Activated CD4-positive, alpha-beta T cell treated with anti-CD3 and anti-CD28 coated beads for 36 hours (primary cell): ENCODE measurements at regions of chr6 and their contacts with region 1.

Region 1: GRCh38 chr6:38997128-38997761 is 51.3 kb upstream of the GLP1R start:
- DNase-seq: peak; percentile 68
- ATAC-seq: peak; percentile 55
- H3K4me3 Mint-ChIP-seq: no peak overlapping the region
- H3K27ac Mint-ChIP-seq: no peak overlapping the region
- H3K4me1 Mint-ChIP-seq: no peaks in the 10 kb centered on the region
- H3K27me3 Mint-ChIP-seq: peaks cover 29% of the 10 kb centered on the region

Region 2: GRCh38 chr6:38933432-38933831 is 63.8 kb before region 1 on chr6:
- CTCF ChIA-PET with region 1: no interaction called
- POLR2A ChIA-PET with region 1: no interaction called
- intact Hi-C with region 1: no loop called
- DNase-seq: no peak
- ATAC-seq: peak; percentile 44
- H3K4me3 Mint-ChIP-seq: no peak overlapping the region
- H3K27ac Mint-ChIP-seq: no peak overlapping the region
- H3K4me1 Mint-ChIP-seq: no peaks in the 10 kb centered on the region
- H3K27me3 Mint-ChIP-seq: peaks cover 2% of the 10 kb centered on the region

Region 3: GRCh38 chr6:38955861-38956260 is 41.4 kb before region 1 on chr6:
- CTCF ChIA-PET with region 1: no interaction called
- POLR2A ChIA-PET with region 1: interaction called, 10 read pairs
- intact Hi-C with region 1: no loop called
- DNase-seq: no peak
- ATAC-seq: no peak
- H3K4me3 Mint-ChIP-seq: no peak overlapping the region
- H3K27ac Mint-ChIP-seq: no peak overlapping the region
- H3K4me1 Mint-ChIP-seq: no peaks in the 10 kb centered on the region
- H3K27me3 Mint-ChIP-seq: peaks cover 8% of the 10 kb centered on the region

Region 4: GRCh38 chr6:39029156-39030011 is 32.1 kb after region 1 on chr6:
- CTCF ChIA-PET with region 1: interaction called, 10 read pairs
- POLR2A ChIA-PET with region 1: no interaction called
- intact Hi-C with region 1: no loop called
- DNase-seq: peak; percentile 80
- ATAC-seq: peak; percentile 92
- H3K4me3 Mint-ChIP-seq: no peak overlapping the region
- H3K27ac Mint-ChIP-seq: no peak overlapping the region
- H3K4me1 Mint-ChIP-seq: no peaks in the 10 kb centered on the region
- H3K27me3 Mint-ChIP-seq: peaks cover 32% of the 10 kb centered on the region

Region 5: GRCh38 chr6:39309942-39310531 is 312.8 kb after region 1 on chr6:
- CTCF ChIA-PET with region 1: interaction called, 27 read pairs
- POLR2A ChIA-PET with region 1: no interaction called
- intact Hi-C with region 1: loop called in 1 of 2 experiments (anchors 1 kb)
- DNase-seq: peak; percentile 81
- ATAC-seq: peak; percentile 79
- H3K4me3 Mint-ChIP-seq: no peak overlapping the region
- H3K27ac Mint-ChIP-seq: no peak overlapping the region
- H3K4me1 Mint-ChIP-seq: peaks cover 4% of the 10 kb centered on the region
- H3K27me3 Mint-ChIP-seq: peaks cover 25% of the 10 kb centered on the region

Region 6: DNA sequence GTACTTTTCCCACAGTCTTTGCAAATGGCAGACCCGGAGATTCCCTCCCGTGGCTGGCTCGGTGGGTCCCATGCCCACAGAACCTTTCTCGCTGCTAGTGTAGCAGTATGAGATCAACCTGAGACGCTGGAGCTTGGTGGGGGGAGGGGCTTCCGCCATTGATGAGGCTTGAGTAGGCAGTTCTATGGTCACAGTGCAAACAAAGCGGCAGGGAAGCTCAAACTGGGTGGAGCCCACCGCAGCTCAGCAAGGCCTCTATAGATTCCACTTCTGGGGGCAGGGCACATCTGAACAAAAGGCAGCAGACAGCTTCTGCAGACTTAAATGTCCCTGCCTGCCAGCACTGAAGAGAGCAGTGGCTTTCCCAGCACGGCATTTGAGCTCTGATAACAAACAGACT is 511.3 kb after region 1 on chr6:
- CTCF ChIA-PET with region 1: no interaction called
- POLR2A ChIA-PET with region 1: no interaction called
- intact Hi-C with region 1: no loop called
- DNase-seq: no peak
- ATAC-seq: no peak
- H3K4me3 Mint-ChIP-seq: no peak overlapping the region
- H3K27ac Mint-ChIP-seq: no peak overlapping the region
- H3K4me1 Mint-ChIP-seq: no peaks in the 10 kb centered on the region
- H3K27me3 Mint-ChIP-seq: peaks cover 10% of the 10 kb centered on the region